ENCODE measurements at regions of chr2 and their contacts with region 1.

Region 1: DNA sequence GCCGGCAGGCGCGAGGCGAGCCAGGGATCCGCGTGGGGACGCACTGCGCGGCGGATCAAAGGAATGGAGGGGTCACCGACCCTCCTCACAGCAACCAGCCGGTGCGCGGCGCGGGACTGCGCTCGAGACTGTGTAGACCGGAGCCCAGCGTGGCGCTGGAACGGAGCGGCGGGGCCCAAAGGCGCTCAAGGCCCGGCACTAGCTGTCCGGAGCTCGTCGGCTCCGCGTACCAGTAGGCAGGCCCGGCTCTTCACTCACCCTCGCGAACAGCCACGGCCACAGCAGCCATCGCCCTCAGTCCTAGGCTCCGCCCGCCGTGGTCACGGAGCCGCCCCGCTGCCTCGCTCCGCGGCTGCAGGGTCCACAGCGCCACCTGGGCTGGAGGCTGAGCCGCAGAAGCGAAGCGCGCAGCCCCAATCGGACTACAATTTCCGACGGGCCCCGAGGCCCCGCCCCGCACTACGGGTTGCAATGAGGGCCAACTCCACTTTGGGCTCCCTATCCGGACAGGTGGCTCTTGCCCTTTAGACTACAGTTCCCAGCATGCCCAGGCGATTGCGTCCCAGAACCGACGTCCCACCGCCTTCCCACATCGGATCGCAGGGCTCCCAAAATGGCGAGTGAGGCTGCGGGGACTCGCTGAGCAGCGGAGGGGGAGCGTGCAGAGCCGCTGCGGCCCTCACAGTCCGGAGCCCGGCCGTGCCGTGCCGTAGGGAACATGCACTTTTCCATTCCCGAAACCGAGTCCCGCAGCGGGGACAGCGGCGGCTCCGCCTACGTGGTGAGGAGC is at the starts of genes EIF2B4 and SNX17:
- DNase-seq: peak; percentile 98 to 100 (median 99)
- ATAC-seq: peak; percentile 92 to 94 (median 94)
- H3K4me3 ChIP-seq: peak within 1 kb of the TSS; percentile 93 to 94
- H3K4me3 Mint-ChIP-seq: peak within 1 kb of the TSS; percentile 90 to 97 (median 94)
- H3K27ac ChIP-seq: peak within 1 kb of the TSS; percentile 76
- H3K27ac Mint-ChIP-seq: peak within 1 kb of the TSS; percentile 95 to 99
- H3K4me1 ChIP-seq: peaks cover 20 to 41% of the 10 kb centered on the region in 2 experiments
- H3K4me1 Mint-ChIP-seq: peaks cover 46 to 55% (median 48%) of the 10 kb centered on the region in 3 donors
- H3K27me3 ChIP-seq: no peaks in the 10 kb centered on the region
- H3K27me3 Mint-ChIP-seq: no peaks in the 10 kb centered on the region
- total RNA-seq, gene EIF2B4: 35.6 to 50.3 (median 40.5) TPM
- total RNA-seq, gene SNX17: 77.9 to 130 (median 121) TPM

Region 2: DNA sequence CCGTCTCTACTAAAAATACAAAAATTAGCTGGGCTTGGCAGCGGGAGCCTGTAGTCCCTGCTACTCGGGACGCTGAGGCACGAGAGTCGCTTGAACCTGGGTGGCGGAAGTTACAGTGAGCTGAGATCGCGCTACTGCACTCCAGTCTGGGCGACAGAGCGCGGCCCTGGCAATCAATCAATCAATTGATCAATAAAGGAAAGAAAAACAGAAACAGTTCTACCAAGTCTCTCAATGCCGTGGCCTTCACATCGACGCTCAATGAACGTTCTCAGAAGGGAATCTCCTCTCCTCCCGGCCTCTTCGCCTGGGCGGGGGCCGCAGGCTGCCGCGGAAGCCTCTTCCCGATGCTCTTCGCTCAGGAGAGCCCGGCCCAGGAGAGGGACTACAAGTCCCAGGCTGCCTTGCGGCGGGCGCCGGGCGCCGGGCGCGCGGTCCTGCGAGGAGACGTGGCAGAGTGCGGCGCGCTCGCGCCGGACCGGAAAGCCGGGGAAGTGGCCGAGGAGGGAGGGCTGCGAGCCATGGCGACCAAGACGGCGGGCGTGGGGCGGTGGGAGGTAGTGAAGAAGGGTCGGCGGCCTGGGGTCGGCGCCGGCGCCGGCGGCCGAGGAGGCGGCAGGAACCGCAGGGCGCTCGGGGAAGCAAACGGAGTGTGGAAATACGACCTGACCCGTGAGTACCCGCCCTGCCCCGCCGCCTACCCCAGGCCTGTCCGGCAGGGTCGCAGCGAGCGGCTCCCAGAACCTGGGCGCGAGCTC is 337.5 kb before region 1 on chr2 and contains the start of gene TMEM214:
- CTCF ChIA-PET with region 1: interaction called in 1 of 2 experiments, 4 read pairs
- POLR2A ChIA-PET with region 1: interaction called in 1 of 2 experiments, 15 read pairs
- DNase-seq: peak; percentile 30 to 81 (median 64)
- ATAC-seq: peak; percentile 95 to 99 (median 98)
- H3K4me3 ChIP-seq: peak within 1 kb of the TSS; percentile 77 to 87
- H3K4me3 Mint-ChIP-seq: peak within 1 kb of the TSS; percentile 90 to 93 (median 91)
- H3K27ac ChIP-seq: peak within 1 kb of the TSS; percentile 82
- H3K27ac Mint-ChIP-seq: peak within 1 kb of the TSS; percentile 87 to 91
- H3K4me1 ChIP-seq: peaks cover 7 to 36% of the 10 kb centered on the region in 2 experiments
- H3K4me1 Mint-ChIP-seq: peaks cover 25 to 52% (median 38%) of the 10 kb centered on the region in 3 donors
- H3K27me3 ChIP-seq: no peaks in the 10 kb centered on the region
- H3K27me3 Mint-ChIP-seq: no peaks in the 10 kb centered on the region
- total RNA-seq, gene TMEM214: 37.6 to 84.5 (median 71.6) TPM

Measured in T-cell (primary cell).